ENCODE measurements at regions of chr3 and their contacts with region 1.

Region 1: GRCh38 chr3:101573449-101574387 is at the start of gene PCNP:
- DNase-seq: peak; percentile 99
- H3K4me3 Mint-ChIP-seq: peak within 1 kb of the TSS; percentile 83
- H3K27ac Mint-ChIP-seq: peak within 1 kb of the TSS; percentile 99
- H3K4me1 Mint-ChIP-seq: peaks cover 72% of the 10 kb centered on the region
- H3K27me3 Mint-ChIP-seq: no peaks in the 10 kb centered on the region
- total RNA-seq, gene PCNP: 169 to 191 TPM

Region 2: DNA sequence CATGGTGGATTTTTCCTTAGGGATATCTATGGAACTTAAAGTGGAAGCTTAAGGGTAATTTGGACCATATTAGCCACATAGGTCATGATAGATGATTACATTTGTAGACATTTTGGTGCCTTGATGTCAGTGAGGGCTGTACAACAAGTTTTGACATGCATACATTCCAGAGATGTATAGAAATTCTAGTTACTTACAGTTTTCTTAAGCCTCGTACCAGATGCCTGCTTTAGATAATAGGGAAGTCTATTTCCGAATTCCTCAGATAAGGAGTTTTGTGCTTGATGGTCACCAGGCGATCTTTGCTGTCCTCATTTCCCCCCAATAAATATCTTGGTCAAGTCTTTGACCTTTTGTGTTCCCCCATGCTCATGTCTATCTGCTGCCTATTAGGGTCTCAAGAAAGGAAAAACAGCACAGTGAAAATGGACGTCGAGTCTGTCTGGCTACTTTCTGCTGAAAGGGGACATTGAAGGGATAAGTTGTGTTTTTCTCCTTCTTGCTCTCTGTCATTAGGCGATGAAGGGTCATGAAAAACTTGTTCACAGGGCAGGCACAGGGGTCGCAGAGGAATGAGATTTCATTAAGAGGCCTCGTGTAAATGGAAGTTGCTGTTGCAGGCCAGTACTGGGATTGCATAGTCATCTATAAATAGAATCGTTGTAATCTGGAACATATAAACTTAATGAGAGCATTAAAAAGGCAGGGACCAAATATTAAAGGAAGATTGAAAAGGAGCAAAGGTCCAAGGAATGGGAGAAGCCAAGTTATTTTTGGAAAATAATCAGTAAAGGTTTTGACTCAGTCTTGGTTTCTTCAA is 40.7 kb before region 1 on chr3:
- CTCF ChIA-PET with region 1: no interaction called
- POLR2A ChIA-PET with region 1: no interaction called
- DNase-seq: no peak
- H3K4me3 Mint-ChIP-seq: no peak overlapping the region
- H3K27ac Mint-ChIP-seq: no peak overlapping the region
- H3K4me1 Mint-ChIP-seq: peaks cover 35% of the 10 kb centered on the region
- H3K27me3 Mint-ChIP-seq: peaks cover 4% of the 10 kb centered on the region

Region 3: GRCh38 chr3:101561630-101562328 is 11.9 kb before region 1 on chr3 and contains the start of gene TRMT10C:
- CTCF ChIA-PET with region 1: interaction called, 21 read pairs
- POLR2A ChIA-PET with region 1: no interaction called
- DNase-seq: peak; percentile 94
- H3K4me3 Mint-ChIP-seq: peak within 1 kb of the TSS; percentile 99
- H3K27ac Mint-ChIP-seq: peak within 1 kb of the TSS; percentile 98
- H3K4me1 Mint-ChIP-seq: peaks cover 43% of the 10 kb centered on the region
- H3K27me3 Mint-ChIP-seq: no peaks in the 10 kb centered on the region
- total RNA-seq, gene TRMT10C: 26.4 to 31.7 TPM

Region 4: GRCh38 chr3:101676765-101677435 is 103.2 kb after region 1 on chr3 and contains the start of gene ZBTB11:
- CTCF ChIA-PET with region 1: interaction called, 11 read pairs
- POLR2A ChIA-PET with region 1: interaction called, 3 read pairs
- DNase-seq: peak; percentile 100
- H3K4me3 Mint-ChIP-seq: peak within 1 kb of the TSS; percentile 93
- H3K27ac Mint-ChIP-seq: peak within 1 kb of the TSS; percentile 98
- H3K4me1 Mint-ChIP-seq: peaks cover 52% of the 10 kb centered on the region
- H3K27me3 Mint-ChIP-seq: no peaks in the 10 kb centered on the region
- total RNA-seq, gene ZBTB11: 30.5 to 34.0 TPM